ENCODE measurements at regions of chr14 and their contacts with region 1.

Region 1: GRCh38 chr14:72516936-72517700 is 376.8 kb downstream of the DPF3 start:
- DNase-seq: peak; percentile 86
- H3K4me3 Mint-ChIP-seq: no peak overlapping the region
- H3K27ac Mint-ChIP-seq: no peak overlapping the region
- H3K4me1 Mint-ChIP-seq: peaks cover 50% of the 10 kb centered on the region
- H3K27me3 Mint-ChIP-seq: no peaks in the 10 kb centered on the region

Region 2: DNA sequence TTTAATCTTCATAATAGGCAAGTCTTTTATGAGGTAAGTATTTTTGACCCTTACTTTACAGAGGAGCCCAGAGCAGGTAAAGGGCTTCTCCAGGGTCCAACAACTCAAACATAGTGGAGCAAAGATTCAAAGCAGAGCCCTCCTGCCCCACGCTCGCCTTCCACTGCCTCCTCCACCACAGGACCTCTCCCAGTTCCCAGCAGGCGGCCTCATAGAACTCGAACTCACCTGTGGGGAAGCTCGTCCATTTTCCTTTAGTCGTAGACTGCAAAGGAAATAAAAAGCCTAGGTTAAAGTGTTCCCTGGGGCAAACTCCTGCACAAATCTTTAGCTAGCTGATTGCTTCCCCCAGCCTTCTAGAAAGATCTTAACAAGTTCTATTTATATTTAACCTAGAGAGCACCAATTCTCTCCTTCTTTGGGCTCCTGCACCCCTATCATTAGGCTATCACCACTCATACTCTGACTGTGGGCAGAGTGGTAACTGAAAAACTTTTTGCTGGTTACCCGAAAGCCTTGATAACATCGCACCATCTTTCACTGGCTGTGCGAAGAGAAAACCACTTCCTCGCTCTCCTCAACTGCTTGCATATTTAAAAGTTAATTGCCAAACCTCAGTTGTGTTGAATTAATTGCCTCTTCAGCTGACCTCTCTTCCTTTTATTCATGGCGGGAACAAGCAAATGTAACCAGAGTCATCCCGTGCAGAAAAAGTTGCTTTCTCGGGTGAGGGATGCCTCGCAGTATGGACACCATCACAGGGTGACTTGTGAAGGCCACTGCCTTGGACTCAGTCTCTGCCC is 77.2 kb after region 1 on chr14:
- CTCF ChIA-PET with region 1: no interaction called
- intact Hi-C with region 1: loop called (anchors 1 kb)
- DNase-seq: peak; percentile 43
- H3K4me3 Mint-ChIP-seq: no peak overlapping the region
- H3K27ac Mint-ChIP-seq: no peak overlapping the region
- H3K4me1 Mint-ChIP-seq: peaks cover 40% of the 10 kb centered on the region
- H3K27me3 Mint-ChIP-seq: no peaks in the 10 kb centered on the region

Region 3: GRCh38 chr14:72714094-72714493 is 197.0 kb after region 1 on chr14:
- CTCF ChIA-PET with region 1: interaction called, 4 read pairs
- intact Hi-C with region 1: loop called (anchors 5 kb)
- DNase-seq: peak; percentile 81
- H3K4me3 Mint-ChIP-seq: no peak overlapping the region
- H3K27ac Mint-ChIP-seq: no peak overlapping the region
- H3K4me1 Mint-ChIP-seq: peaks cover 26% of the 10 kb centered on the region
- H3K27me3 Mint-ChIP-seq: no peaks in the 10 kb centered on the region

Region 4: DNA sequence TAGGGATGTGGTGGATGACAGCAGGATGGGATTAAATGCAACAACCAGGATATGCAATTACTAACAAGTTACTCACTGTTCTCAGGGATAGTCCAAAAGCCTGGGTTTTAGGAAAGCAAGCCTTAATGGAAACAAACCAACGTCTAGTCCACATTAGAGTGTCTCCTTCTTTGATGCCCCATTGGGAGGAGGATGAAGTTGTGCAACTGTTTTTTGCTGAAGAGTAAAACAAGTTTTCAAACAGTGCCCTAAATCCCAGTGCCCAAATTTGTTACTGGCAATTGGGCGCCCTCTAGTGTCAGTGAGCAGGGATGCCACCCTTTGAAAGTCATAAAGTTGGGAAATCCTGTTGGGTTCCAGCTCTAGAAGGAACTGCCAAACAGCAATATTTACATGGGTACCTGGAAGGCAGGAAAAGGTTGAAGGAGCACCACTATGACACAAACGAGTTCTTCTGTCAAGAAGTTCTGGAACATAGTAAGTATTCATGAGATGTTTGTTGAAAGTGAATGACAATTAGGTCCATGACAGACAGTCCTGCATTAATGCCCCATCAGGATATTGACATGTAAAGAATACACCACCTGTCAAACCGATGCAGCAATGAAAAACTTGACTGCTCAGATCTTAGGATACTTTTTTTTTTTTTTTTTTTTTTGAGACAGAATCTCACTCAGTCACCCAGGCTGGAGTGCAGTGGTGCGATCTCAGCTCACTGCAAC is 387.9 kb after region 1 on chr14:
- CTCF ChIA-PET with region 1: interaction called, 185 read pairs
- intact Hi-C with region 1: loop called (anchors 1 kb)
- DNase-seq: peak; percentile 76
- H3K4me3 Mint-ChIP-seq: no peak overlapping the region
- H3K27ac Mint-ChIP-seq: no peak overlapping the region
- H3K4me1 Mint-ChIP-seq: no peaks in the 10 kb centered on the region
- H3K27me3 Mint-ChIP-seq: peaks cover 10% of the 10 kb centered on the region

Region 5: DNA sequence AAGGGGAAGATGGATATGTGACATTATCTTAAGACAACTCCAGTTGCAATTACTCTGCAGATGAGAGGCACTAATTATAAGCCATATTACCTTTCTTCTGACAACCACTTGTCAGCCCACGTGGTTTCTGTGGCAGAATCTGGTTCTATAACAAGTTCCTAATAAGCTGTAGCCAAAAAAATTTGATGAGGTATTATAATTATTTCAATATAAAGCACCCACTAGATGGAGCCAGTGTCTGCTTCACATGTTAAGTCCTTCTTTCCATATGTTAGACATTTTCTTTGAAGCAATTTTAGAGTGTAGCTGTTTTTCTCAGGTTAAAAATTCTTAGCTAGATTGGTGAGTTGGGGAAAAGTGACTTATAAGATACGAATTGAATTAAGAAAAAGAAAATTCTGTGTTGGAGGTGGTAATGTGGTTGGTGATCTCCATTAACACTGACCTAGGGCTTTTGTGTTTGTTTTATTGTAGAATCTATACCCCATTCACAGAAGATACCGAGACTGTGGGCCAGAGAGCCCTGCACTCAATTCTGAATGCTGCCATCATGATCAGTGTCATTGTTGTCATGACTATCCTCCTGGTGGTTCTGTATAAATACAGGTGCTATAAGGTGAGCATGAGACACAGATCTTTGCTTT is 656.1 kb after region 1 on chr14:
- CTCF ChIA-PET with region 1: no interaction called
- intact Hi-C with region 1: no loop called
- DNase-seq: no peak
- H3K4me3 Mint-ChIP-seq: no peak overlapping the region
- H3K27ac Mint-ChIP-seq: no peak overlapping the region
- H3K4me1 Mint-ChIP-seq: peaks cover 2% of the 10 kb centered on the region
- H3K27me3 Mint-ChIP-seq: no peaks in the 10 kb centered on the region

Region 6: GRCh38 chr14:73463411-73463810 is 946.3 kb after region 1 on chr14:
- CTCF ChIA-PET with region 1: no interaction called
- intact Hi-C with region 1: loop called (anchors 5 kb)
- DNase-seq: peak; percentile 72
- H3K4me3 Mint-ChIP-seq: peak overlapping the region; percentile 32
- H3K27ac Mint-ChIP-seq: peak overlapping the region; percentile 52
- H3K4me1 Mint-ChIP-seq: peaks cover 52% of the 10 kb centered on the region
- H3K27me3 Mint-ChIP-seq: no peaks in the 10 kb centered on the region

Measured in activated naive CD4-positive, alpha-beta T cell treated with anti-CD3 and anti-CD28 coated beads for 36 hours (primary cell).